Endothelial cell of umbilical vein (primary cell): ENCODE measurements at regions of chr15 and their contacts with region 1.

Region 1: DNA sequence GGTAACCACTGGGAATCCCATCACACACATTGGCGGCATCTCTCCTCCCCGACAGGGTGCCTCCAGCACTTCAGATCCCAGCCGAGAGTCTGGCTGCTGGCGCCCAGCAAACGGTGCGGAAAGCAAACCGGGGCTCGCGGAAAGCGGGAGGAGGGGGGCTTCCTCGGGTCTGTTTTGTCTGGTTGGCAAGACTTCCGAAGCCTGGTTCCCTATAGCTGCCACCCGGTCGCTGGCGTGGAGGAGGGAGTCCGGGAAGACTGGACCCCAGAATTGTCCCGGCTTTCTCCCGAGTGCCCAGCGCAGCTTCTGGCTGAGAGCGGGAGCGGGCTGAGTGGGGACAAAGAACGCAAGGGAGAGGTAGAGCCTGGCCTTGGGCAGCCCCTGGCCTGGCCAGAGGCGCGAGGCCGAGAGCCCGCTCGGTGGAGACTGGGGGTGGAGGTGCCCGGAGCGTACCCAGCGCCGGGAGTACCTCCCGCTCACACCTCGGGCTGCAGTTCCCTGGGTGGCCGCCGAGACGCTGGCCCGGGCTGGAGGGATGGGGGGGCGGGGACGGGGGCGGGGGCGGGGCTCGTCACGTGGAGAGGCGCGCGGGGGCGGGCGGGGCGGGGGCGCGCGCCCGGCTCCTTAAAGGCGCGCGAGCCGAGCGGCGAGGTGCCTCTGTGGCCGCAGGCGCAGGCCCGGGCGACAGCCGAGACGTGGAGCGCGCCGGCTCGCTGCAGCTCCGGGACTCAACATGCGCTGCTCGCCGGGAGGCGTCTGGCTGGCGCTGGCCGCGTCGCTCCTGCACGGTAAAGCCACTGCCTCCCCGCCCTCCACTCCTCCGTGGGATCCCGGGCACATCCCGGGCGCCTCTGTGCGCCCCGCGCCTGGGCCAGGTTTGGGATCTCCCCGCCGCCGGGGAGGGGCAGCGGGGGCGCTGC is at the start of gene CHRNA7:
- DNase-seq: peak; percentile 19
- H3K4me3 ChIP-seq: peak within 1 kb of the TSS in 2 of 3 experiments; percentile 30 to 44
- H3K27ac ChIP-seq: no peak within 1 kb of the TSS
- H3K4me1 ChIP-seq: no peaks in the 10 kb centered on the region
- H3K27me3 ChIP-seq: peaks cover 26 to 30% of the 10 kb centered on the region in 2 experiments
- CTCF ChIP-seq: peak in 1 of 2 donors; percentile 32
- POLR2A ChIP-seq: no peak
- total RNA-seq, gene CHRNA7: 2.6 and 2.7 TPM in 2 replicates

Region 2: DNA sequence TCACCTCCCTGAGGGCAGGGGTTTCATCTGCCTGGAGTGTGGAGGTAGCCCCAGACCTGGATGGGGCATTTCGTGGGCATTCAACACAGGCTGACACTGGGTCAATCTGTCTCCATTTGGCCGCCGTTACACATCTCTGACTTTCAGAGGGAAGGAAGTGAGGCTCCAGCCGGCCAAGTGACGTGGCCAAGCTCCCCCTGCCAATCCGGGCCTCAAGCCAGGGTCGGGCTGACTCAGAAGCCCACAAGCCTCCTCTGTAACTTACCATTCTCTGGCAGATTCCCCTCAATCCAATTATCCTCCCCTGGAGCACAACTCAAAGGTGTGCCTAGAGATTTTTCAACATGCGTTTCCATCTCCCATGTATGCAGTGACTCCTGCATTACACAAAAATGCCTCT is 475.9 kb before region 1 on chr15:
- CTCF ChIA-PET with region 1: no interaction called
- POLR2A ChIA-PET with region 1: no interaction called
- dilution Hi-C with region 1: no loop called
- intact Hi-C with region 1: loop called (anchors 5 kb)
- DNase-seq: peak; percentile 80
- H3K4me3 ChIP-seq: no peak overlapping the region
- H3K27ac ChIP-seq: peak overlapping the region; percentile 55
- H3K4me1 ChIP-seq: peaks cover 9% of the 10 kb centered on the region
- H3K27me3 ChIP-seq: no peaks in the 10 kb centered on the region
- CTCF ChIP-seq: no peak
- POLR2A ChIP-seq: no peak

Region 3: DNA sequence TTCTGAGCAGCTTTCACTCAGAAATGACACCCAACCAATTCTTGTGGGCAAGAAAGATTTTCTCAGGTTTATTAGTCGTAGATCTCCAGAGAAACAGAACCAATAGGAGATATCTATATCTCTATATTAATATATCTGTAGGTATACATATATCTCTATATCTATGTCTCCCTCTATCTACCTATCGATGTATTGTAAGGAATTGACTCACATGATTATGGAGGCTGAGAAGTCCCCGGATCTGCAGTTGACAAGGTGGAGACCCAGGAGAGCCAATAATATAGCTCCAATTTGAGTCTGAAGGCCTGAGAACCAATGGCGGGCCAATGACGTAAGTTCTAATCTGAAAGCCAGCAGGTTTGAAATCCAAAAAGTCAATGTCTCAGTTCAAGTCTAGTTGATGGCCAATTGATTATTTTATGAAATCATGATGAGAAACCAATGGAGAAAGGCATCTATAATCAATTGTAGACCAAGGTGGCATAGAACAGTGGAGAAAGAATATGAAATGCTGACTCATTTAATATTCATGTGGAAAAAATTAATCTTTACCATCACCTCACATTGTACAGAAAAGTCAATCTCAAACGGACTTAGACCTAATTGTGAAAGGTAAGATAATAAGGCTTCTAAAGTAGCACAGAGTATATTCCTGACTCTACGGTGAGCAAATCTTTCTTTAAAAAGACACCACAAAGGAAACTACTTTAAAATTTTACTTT is 65.4 kb before region 1 on chr15:
- CTCF ChIA-PET with region 1: no interaction called
- POLR2A ChIA-PET with region 1: no interaction called
- dilution Hi-C with region 1: no loop called
- intact Hi-C with region 1: no loop called
- DNase-seq: no peak
- H3K4me3 ChIP-seq: no peak overlapping the region
- H3K27ac ChIP-seq: no peak overlapping the region
- H3K4me1 ChIP-seq: no peaks in the 10 kb centered on the region
- H3K27me3 ChIP-seq: no peaks in the 10 kb centered on the region
- CTCF ChIP-seq: no peak
- POLR2A ChIP-seq: no peak

Region 4: DNA sequence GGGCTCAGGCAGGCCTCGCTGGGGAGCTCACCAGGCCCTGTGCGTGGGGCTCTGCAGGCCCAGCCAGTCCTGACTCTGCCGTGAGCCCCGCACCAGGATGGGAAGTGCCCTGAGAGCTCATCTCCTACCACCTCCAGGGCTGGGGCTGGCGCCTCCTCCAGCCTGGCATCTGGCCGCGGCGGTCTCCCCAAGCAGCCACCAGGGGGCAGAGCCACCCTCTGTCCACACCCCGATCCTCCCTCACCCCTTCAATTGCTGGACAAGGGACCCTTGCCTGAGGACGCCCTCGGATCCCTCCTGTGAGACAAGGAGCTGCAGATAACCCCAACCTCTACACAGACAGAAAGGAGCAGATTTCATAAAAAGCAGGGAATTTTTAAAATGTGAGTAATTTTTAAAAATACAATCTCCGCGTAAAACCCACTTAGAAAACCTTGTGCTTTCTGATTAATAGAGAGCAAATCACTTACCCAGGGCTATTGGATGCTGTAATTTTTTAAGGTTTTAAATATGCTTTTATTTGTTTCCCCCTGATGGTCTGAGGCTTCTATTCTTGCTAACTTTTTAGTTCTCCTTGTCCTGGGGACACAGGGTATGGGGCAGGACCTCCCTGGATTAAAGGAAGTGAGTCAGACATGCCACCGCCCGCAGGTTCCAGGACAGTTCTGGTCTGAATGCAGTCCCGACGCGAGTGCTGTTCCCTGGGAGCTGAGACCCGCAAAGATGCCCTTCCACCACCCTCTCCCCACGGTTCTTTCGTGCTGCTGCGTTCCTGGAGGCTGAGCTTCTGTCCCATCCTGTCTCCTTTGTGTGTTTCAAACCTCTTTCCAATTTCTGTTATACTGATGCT is 52.1 kb before region 1 on chr15:
- CTCF ChIA-PET with region 1: interaction called, 3 read pairs
- POLR2A ChIA-PET with region 1: no interaction called
- dilution Hi-C with region 1: no loop called
- intact Hi-C with region 1: loop called (anchors 5 kb)
- DNase-seq: peak; percentile 26
- H3K4me3 ChIP-seq: no peak overlapping the region
- H3K27ac ChIP-seq: no peak overlapping the region
- H3K4me1 ChIP-seq: peaks cover 3% of the 10 kb centered on the region
- H3K27me3 ChIP-seq: no peaks in the 10 kb centered on the region
- CTCF ChIP-seq: peak; percentile 88 to 93
- POLR2A ChIP-seq: no peak

Region 5: DNA sequence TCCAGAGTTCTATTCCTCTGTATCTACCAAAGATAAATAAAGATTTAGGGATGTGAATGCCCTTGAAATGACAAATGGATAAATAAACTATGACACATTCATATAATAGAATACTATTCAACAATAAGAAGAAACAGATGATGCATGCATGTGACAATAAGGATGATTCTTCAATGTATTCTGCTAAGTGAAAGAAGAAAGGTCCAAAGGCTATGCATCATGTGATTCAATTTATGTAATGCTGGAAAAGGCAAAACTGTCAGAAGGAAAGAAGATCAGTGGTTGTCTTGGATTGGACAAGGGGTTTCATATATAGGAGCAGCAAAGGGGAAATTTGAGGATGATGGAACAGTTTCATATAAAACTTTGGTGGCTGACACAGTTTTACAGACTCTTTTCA is 32.4 kb before region 1 on chr15:
- CTCF ChIA-PET with region 1: no interaction called
- POLR2A ChIA-PET with region 1: no interaction called
- dilution Hi-C with region 1: no loop called
- intact Hi-C with region 1: loop called (anchors 5 kb)
- DNase-seq: no peak
- H3K4me3 ChIP-seq: no peak overlapping the region
- H3K27ac ChIP-seq: no peak overlapping the region
- H3K4me1 ChIP-seq: no peaks in the 10 kb centered on the region
- H3K27me3 ChIP-seq: no peaks in the 10 kb centered on the region
- CTCF ChIP-seq: no peak
- POLR2A ChIP-seq: no peak